ENCODE measurements at regions of chr7 and their contacts with region 1.

Region 1: GRCh38 chr7:55255496-55256435 is 109.4 kb upstream of the LANCL2 start:
- DNase-seq: peak; percentile 20
- ATAC-seq: peak; percentile 96
- H3K4me3 ChIP-seq: peak overlapping the region; percentile 67; the same call in 1 of the 2 replicates
- H3K27ac ChIP-seq: no peak overlapping the region
- H3K4me1 ChIP-seq: peaks cover 4% of the 10 kb centered on the region; the same call in 1 of the 2 replicates
- H3K27me3 ChIP-seq: peaks cover 0 to 6% of the 10 kb centered on the region in 2 experiments; a peak in 3 of 4 replicates
- CTCF ChIP-seq: peak; percentile 88 to 92 (median 89)
- EP300 ChIP-seq: no peak
- POLR2A ChIP-seq: no peak
- RAD21 ChIP-seq: peak; percentile 86

Region 2: DNA sequence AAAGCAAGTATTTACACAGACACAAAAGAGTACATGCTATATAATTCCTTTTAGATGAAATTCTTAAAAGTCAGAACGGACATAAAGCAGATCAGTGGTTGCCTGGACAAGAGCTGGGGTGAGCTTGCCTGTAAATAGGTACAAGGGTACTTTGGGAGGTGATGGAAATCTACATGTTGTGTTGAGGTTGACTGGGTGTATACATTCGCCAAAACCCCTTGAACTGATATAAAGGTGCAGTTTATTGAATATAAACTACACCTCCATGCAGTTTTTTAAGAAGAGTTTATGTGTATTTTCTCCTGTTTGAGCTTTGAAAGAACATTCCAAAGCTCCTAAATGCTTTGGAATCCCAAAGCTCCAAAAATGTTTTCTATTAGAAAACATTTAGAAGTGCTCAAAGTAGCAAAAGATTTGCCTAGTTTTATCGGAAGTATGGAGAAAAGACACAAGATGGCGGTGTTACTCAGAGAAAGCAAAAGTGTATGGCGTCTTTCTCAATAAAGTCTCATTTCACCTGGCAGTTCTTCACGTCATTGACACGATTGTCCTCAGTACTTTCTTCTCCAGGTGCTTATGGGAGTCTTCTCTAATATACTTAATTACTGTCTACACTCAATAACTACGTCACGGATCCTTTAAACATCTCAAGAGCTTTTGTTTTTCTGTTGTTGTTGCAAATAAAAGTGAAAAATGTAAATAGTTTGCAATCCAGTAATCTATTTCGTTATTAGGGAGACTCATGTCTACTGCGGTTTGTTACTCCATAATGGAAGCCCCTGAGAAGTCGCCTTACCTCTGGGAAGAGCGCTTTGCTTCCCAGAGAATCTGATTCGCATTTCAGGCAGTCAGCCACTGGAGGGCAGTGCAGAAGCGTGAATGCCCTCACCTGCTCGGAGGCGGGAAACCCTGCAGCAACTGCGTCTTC is 482.0 kb before region 1 on chr7:
- CTCF ChIA-PET with region 1: interaction called, 48 read pairs
- POLR2A ChIA-PET with region 1: interaction called, 3 read pairs
- RAD21 ChIA-PET with region 1: interaction called, 41 read pairs
- SMC1A ChIA-PET with region 1: interaction called, 34 read pairs
- in situ Hi-C with region 1: loop called (anchors 5 kb)
- intact Hi-C with region 1: loop called (anchors 1 kb)
- DNase-seq: no peak
- ATAC-seq: peak; percentile 82
- H3K4me3 ChIP-seq: no peak overlapping the region
- H3K27ac ChIP-seq: no peak overlapping the region
- H3K4me1 ChIP-seq: no peaks in the 10 kb centered on the region
- H3K27me3 ChIP-seq: no peaks in the 10 kb centered on the region
- CTCF ChIP-seq: peak; percentile 71 to 89 (median 82)
- EP300 ChIP-seq: no peak
- POLR2A ChIP-seq: no peak
- RAD21 ChIP-seq: peak; percentile 96

Region 3: DNA sequence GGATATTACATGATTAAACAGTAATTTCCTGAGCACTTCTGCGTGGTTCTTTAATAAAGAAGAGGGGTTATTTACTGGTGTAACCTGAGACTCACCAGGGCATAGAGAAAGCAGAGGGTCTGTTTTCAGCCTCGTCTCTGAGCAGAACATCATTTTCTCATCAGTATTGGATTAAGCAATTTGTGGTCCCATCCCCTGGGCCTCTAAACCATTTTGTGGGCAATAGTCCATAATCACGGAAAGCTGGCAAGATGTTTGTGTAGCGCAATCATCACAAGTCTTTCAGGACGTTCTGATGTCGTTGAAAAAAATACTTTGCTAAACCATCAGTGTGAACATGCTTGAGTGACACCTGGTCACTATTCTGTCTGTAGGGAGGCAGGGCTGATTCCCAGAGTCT is 459.6 kb before region 1 on chr7:
- CTCF ChIA-PET with region 1: interaction called, 82 read pairs
- POLR2A ChIA-PET with region 1: no interaction called
- RAD21 ChIA-PET with region 1: interaction called, 75 read pairs
- SMC1A ChIA-PET with region 1: interaction called, 16 read pairs
- in situ Hi-C with region 1: no loop called
- intact Hi-C with region 1: no loop called
- DNase-seq: no peak
- ATAC-seq: no peak
- H3K4me3 ChIP-seq: no peak overlapping the region
- H3K27ac ChIP-seq: no peak overlapping the region
- H3K4me1 ChIP-seq: no peaks in the 10 kb centered on the region
- H3K27me3 ChIP-seq: no peaks in the 10 kb centered on the region; a peak in 1 of 4 replicates
- CTCF ChIP-seq: no peak
- EP300 ChIP-seq: no peak
- POLR2A ChIP-seq: no peak
- RAD21 ChIP-seq: no peak

Region 4: GRCh38 chr7:55065079-55065478 is 190.7 kb before region 1 on chr7:
- CTCF ChIA-PET with region 1: interaction called, 29 read pairs
- POLR2A ChIA-PET with region 1: no interaction called
- RAD21 ChIA-PET with region 1: interaction called, 16 read pairs
- SMC1A ChIA-PET with region 1: interaction called, 4 read pairs
- in situ Hi-C with region 1: no loop called
- intact Hi-C with region 1: loop called (anchors 10 kb)
- DNase-seq: peak; percentile 31
- ATAC-seq: peak; percentile 88
- H3K4me3 ChIP-seq: no peak overlapping the region
- H3K27ac ChIP-seq: no peak overlapping the region
- H3K4me1 ChIP-seq: peaks cover 3% of the 10 kb centered on the region; the same call in 1 of the 2 replicates
- H3K27me3 ChIP-seq: no peaks in the 10 kb centered on the region
- CTCF ChIP-seq: no peak
- EP300 ChIP-seq: no peak; a peak in 1 of 4 replicates
- POLR2A ChIP-seq: no peak
- RAD21 ChIP-seq: no peak

Region 5: DNA sequence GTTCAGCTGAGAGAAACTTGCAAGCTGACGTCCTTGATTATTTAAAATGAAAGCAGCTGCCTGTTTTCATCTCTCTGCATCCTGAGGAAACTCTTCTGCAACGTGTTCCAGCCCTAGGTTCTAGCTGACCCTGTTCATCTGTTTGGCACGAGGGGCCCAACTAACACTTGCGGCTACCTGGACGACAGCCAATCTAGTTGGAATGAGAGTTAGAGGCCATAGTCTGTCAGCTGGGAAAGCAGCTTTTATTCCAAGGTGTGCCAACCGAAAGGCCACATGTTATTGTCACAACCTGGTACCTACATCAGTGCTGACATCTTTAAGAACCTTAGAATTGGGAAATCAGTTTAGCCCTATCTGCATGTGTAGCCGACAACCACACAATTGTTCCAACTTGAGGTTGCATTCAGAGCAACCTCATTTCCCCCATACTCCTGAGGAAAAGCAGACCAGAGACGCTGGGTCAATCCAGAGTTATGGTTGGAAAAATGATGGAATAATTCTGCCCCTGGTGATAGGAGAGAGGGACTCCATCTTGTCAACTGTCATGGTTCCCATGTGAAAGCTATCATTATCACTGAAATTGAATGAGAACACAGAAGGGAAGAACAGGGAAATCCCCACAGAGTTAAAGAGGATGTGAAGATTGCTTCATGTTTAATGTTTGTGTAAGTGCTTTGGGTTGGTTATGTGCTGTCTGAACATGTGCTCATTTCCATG is 115.4 kb before region 1 on chr7:
- CTCF ChIA-PET with region 1: interaction called, 7 read pairs
- POLR2A ChIA-PET with region 1: no interaction called
- RAD21 ChIA-PET with region 1: no interaction called
- SMC1A ChIA-PET with region 1: no interaction called
- in situ Hi-C with region 1: no loop called
- intact Hi-C with region 1: loop called (anchors 5 kb)
- DNase-seq: peak; percentile 63
- ATAC-seq: peak; percentile 97
- H3K4me3 ChIP-seq: no peak overlapping the region
- H3K27ac ChIP-seq: no peak overlapping the region
- H3K4me1 ChIP-seq: peaks cover 5% of the 10 kb centered on the region
- H3K27me3 ChIP-seq: no peaks in the 10 kb centered on the region
- CTCF ChIP-seq: no peak
- EP300 ChIP-seq: no peak
- POLR2A ChIP-seq: no peak
- RAD21 ChIP-seq: no peak

Measured in GM12878 (cell line).